HCT116 (cell line): ENCODE measurements at regions of chr4 and their contacts with region 1.

Region 1: DNA sequence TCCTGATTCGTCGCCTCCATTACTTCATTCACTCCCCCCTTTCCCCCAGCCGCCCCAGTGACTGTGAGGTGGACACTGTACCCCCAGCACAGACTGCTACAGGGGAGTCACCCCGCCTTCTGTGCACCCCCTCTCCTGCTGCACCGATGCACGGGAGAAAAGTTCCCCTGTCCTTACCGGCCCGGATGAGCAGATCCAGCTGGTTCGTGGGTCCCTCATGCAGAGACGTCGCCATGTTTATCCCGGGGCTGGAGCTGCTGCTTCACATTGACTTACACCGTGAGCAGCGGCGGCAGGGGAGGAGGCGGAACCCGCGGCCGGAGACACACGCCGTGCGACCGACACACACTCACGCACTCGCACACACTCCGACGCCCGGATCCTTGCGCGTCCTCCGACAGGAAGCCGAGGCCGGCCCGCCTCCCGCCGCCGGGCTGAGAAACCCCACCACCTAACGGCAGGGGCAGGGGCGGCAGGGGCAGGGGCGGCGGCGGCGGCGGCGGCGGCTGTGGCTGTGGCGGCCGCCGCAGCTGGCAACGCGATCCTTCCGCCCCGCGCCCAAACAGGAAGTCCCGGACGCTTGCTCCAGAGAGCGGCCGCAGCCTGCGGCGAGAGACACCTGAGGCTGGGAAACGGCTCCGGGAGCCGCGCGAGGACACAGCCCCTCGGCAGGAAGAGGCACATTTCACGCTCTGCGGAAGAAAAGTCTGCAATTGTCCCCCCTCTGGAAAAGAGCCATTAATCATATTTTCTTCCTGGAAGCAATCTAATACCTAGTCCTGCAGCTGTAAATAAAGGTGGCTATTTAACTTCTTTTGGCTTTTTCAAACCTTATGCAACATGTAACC is 68.6 kb downstream of the NOCT start:
- DNase-seq: peak; percentile 86
- ATAC-seq: peak; percentile 74
- H3K4me3 ChIP-seq: peak overlapping the region; percentile 75 to 96
- H3K27ac ChIP-seq: peak overlapping the region; percentile 97
- H3K4me1 ChIP-seq: peaks cover 4 to 21% of the 10 kb centered on the region in 2 experiments; a peak in 3 of 4 replicates
- H3K27me3 ChIP-seq: no peaks in the 10 kb centered on the region
- CTCF ChIP-seq: no peak; a peak in 2 of 6 replicates
- POLR2A ChIP-seq: no peak
- RAD21 ChIP-seq: no peak

Region 2: GRCh38 chr4:139015269-139015947 is 68.8 kb before region 1 on chr4 and contains the start of gene NOCT:
- CTCF ChIA-PET with region 1: no interaction called
- POLR2A ChIA-PET with region 1: no interaction called
- RAD21 ChIA-PET with region 1: no interaction called
- intact Hi-C with region 1: loop called (anchors 2 kb)
- DNase-seq: peak; percentile 82
- ATAC-seq: peak; percentile 87
- H3K4me3 ChIP-seq: peak within 1 kb of the TSS; percentile 88 to 93
- H3K27ac ChIP-seq: peak within 1 kb of the TSS; percentile 82
- H3K4me1 ChIP-seq: peaks cover 20 to 49% of the 10 kb centered on the region in 2 experiments
- H3K27me3 ChIP-seq: no peaks in the 10 kb centered on the region
- CTCF ChIP-seq: no peak
- POLR2A ChIP-seq: peak; percentile 91
- RAD21 ChIP-seq: no peak
- total RNA-seq, gene NOCT: 20.4 TPM

Region 3: GRCh38 chr4:139301113-139301820 is 217.1 kb after region 1 on chr4 and contains the start of gene NAA15:
- CTCF ChIA-PET with region 1: no interaction called
- POLR2A ChIA-PET with region 1: interaction called, 5 read pairs
- RAD21 ChIA-PET with region 1: interaction called in 1 of 2 experiments, 3 read pairs
- intact Hi-C with region 1: loop called (anchors 1 kb)
- DNase-seq: peak; percentile 97
- ATAC-seq: peak; percentile 94
- H3K4me3 ChIP-seq: peak within 1 kb of the TSS; percentile 70 to 94
- H3K27ac ChIP-seq: peak within 1 kb of the TSS; percentile 70
- H3K4me1 ChIP-seq: peaks cover 18 to 30% of the 10 kb centered on the region in 2 experiments
- H3K27me3 ChIP-seq: no peaks in the 10 kb centered on the region
- CTCF ChIP-seq: no peak
- POLR2A ChIP-seq: peak; percentile 93
- RAD21 ChIP-seq: no peak
- total RNA-seq, gene NAA15: 79.7 TPM